ENCODE measurements at regions of chr18 and their contacts with region 1.

Region 1: DNA sequence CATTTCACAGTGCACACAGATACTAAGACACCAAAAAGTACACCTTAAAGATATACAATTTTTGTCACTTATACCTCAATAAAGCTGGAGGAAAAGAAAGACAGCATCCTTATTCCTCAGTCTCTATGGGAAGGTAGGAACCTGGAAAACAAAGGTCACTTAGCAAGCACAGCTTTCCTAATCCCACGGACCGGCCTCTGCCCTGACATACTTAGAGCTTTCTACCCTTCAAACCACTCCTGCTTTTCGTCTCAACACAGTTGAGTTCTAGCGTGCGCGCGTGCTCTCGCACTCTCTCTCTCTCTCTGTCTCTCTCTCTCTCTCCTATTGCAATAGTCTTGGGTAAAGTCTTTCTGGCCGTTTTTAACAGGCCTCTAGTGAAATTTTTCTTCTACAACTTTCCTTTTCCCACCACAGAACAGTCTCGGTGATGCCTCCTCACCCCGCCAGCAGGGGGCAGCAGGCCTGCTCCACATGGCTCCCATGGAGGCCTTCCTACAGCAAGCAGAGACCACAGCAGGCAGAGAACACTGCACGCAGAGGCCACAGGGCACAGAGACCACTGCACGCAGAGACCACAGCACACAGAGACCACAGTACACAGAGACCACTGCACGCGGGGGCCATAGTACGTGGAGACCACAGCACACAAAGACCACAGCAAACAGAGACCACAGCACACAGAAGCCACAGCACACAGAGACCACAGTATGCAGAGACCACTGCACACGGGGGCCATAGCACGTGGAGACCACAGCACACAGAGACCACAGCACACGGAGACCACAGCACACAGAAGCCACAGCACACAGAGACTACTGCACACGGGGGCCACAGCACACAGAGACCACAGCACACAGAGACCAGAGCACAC is 106.9 kb downstream of the FBXO15 start:
- DNase-seq: peak in 4 of 5 donors; percentile 30 to 43 (median 36)
- H3K4me3 ChIP-seq: no peak overlapping the region
- H3K4me3 Mint-ChIP-seq: no peak overlapping the region
- H3K27ac ChIP-seq: no peak overlapping the region
- H3K27ac Mint-ChIP-seq: no peak overlapping the region
- H3K4me1 ChIP-seq: no peaks in the 10 kb centered on the region
- H3K4me1 Mint-ChIP-seq: no peaks in the 10 kb centered on the region
- H3K27me3 ChIP-seq: no peaks in the 10 kb centered on the region
- H3K27me3 Mint-ChIP-seq: peaks cover 2 to 8% of the 10 kb centered on the region in 2 donors

Region 2: DNA sequence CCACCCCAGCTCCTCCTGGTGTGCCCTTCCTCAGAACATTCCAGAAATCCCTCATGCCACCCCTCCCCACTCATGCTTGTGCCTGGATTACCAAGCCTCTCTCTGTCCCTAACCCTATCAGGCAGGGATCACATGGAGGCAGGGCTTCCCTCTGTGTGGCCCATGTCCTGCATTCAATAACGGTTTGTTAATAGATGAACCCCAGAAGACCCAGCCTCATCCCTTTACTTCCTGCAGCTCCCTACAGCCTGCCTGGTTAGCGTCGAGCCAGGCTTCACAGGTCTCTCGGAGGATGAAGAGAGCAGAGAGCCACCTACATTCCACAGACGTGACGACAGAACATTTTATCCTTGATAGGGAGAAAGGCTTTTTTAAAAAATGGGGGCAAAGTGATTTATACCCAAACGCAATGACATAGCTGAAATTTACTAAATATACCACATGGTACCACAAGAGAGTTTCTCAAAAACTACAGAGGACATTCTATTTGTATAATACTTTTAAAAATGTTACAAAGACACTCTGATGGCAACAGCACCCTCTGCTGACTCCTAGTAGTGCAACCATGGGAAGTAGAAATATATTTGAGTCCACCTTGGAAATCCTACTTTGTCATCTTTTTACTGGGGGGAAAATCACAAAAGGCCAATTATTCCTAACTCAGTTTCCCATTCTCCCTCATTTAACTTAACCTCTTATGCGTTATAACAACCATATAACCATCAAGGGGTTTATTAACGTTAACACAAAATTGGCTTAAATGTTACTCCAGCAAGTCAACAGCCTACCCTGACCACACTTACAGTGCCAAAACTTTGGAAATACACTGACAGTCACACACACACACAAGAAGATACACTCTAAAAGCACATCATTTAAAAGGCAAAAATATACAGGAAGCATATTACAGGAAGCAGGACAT is 76.2 kb after region 1 on chr18:
- CTCF ChIA-PET with region 1: interaction called, 7 read pairs
- POLR2A ChIA-PET with region 1: no interaction called
- intact Hi-C with region 1: loop called (anchors 1 kb)
- DNase-seq: peak in 1 of 5 donors; percentile 18
- H3K4me3 ChIP-seq: no peak overlapping the region
- H3K4me3 Mint-ChIP-seq: no peak overlapping the region
- H3K27ac ChIP-seq: no peak overlapping the region
- H3K27ac Mint-ChIP-seq: no peak overlapping the region
- H3K4me1 ChIP-seq: no peaks in the 10 kb centered on the region
- H3K4me1 Mint-ChIP-seq: no peaks in the 10 kb centered on the region
- H3K27me3 ChIP-seq: no peaks in the 10 kb centered on the region
- H3K27me3 Mint-ChIP-seq: peaks cover 2 to 5% of the 10 kb centered on the region in 2 donors

Region 3: GRCh38 chr18:75041586-75041985 is 1000.9 kb after region 1 on chr18:
- CTCF ChIA-PET with region 1: no interaction called
- POLR2A ChIA-PET with region 1: no interaction called
- intact Hi-C with region 1: no loop called
- DNase-seq: no peak
- H3K4me3 ChIP-seq: no peak overlapping the region
- H3K4me3 Mint-ChIP-seq: no peak overlapping the region
- H3K27ac ChIP-seq: no peak overlapping the region
- H3K27ac Mint-ChIP-seq: peak overlapping the region in 2 of 7 donors; percentile 7 to 79
- H3K4me1 ChIP-seq: no peaks in the 10 kb centered on the region
- H3K4me1 Mint-ChIP-seq: no peaks in the 10 kb centered on the region
- H3K27me3 ChIP-seq: no peaks in the 10 kb centered on the region
- H3K27me3 Mint-ChIP-seq: no peaks in the 10 kb centered on the region

Measured in CD4-positive, alpha-beta memory T cell (primary cell).